ENCODE measurements at regions of chr10 and their contacts with region 1.

Region 1: DNA sequence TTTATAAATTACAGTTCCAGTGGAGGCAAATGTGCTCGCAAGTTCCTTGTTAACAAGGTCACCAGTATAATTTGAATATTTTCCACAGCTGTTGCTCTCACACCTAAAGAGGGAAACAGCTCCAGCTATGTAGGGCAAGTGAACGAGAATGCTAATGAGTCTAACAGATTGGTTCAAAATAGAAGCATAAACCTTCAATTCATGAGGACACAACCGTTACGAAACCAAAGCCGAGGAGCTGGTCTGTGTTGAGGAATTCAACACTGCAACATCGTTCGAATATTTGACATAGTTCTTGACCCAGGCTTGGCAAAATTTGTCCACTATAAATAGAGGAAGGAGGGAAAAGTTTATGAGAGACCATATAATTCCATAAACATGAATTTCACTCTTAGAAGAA is 161.3 kb downstream of the KLF6 start:
- DNase-seq: peak; percentile 87
- ATAC-seq: peak; percentile 78
- H3K4me3 ChIP-seq: no peak overlapping the region
- H3K27ac ChIP-seq: peak overlapping the region; percentile 15; the same call in 1 of the 2 replicates
- H3K4me1 ChIP-seq: peaks cover 11% of the 10 kb centered on the region
- H3K27me3 ChIP-seq: no peaks in the 10 kb centered on the region
- CTCF ChIP-seq: no peak
- POLR2A ChIP-seq: no peak
- RAD21 ChIP-seq: no peak

Region 2: DNA sequence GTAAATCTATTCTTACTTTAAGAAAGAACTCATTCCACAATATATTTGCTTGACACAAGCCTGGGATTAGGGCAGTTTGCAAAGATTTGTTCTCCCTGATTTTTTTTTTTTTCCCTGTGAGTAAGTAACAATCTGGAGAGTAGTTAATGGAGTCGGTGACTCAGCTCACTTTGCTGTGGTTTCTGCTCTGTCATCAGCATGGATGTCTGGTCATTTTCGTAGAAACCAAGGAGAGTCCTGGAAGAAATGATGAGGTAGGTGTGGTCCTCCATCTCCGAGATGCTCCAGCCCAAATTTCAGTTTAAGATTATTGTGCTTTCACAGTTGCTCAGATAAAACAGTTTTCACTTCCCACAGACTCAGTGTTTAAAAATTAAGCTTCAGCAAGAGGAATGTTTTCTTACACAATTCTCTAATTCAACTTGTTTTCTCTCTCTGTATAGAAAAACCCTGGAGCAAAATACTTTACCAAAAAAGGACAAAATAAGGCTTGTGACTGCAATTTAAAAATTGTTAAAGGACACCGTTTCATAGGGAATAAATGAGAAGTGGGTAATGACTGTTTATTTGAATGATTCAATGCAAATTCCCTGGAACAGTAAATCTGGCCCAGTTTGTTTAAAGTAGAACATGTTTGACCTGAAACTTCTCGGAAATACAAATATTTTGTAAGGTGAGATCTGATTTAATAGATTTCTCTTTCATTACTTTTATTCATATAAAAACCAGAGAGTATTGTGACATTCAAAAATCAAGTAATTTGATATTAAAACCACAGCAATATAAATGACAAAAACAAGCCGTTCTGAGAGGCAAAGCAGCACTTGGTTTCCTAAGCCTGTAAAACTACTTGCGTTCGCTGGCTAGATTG is 374.6 kb before region 1 on chr10:
- CTCF ChIA-PET with region 1: no interaction called
- POLR2A ChIA-PET with region 1: no interaction called
- dilution Hi-C with region 1: no loop called
- in situ Hi-C with region 1: no loop called
- intact Hi-C with region 1: loop called (anchors 2 kb)
- DNase-seq: peak; percentile 94
- ATAC-seq: peak; percentile 95
- H3K4me3 ChIP-seq: peak overlapping the region; percentile 11; the same call in 1 of the 2 replicates
- H3K27ac ChIP-seq: peak overlapping the region; percentile 89
- H3K4me1 ChIP-seq: peaks cover 4% of the 10 kb centered on the region
- H3K27me3 ChIP-seq: no peaks in the 10 kb centered on the region
- CTCF ChIP-seq: no peak
- POLR2A ChIP-seq: no peak
- RAD21 ChIP-seq: no peak; the same call in 1 of the 2 replicates

Region 3: DNA sequence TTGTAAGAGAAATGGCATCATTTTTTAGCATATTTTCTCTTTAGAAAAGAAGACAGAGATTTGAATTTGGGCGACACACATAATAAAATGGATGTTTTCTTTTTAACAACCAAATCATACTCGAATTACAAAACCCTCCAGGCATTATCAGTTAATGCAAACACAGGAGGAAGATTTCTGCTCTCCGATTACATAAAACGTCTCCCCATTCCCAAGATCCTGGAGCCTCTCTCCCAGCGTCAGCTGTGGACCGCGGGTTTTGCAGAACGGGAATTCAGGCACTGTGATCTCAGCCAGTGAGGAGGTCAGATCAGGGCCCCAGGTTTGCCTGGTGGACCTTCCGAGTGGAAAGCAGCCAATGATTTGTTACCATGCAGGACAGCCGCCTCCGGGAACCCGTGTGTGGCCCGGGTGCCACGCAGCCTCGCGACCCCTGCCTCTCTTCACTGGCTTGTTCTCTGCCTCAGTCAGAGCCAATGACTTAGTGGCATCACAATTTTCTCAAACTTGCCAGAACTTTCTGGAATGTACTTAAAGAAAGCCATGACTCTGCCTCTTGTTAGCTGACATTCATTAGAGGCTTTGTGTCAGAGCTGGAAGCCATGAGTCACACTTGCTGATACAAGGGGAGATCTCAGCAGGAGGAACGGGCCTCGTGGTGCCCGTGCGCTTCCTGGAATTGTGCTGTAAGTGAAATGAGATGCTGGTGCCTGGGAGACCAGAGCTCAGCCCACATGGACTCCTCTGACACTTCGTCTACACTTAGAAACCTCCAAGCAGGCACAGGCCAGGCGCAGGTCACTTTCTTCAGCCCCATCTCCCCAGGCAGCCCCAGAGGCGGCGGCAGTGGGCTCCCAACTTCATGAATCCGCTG is 84.9 kb before region 1 on chr10:
- CTCF ChIA-PET with region 1: no interaction called
- POLR2A ChIA-PET with region 1: no interaction called
- dilution Hi-C with region 1: no loop called
- in situ Hi-C with region 1: no loop called
- intact Hi-C with region 1: loop called (anchors 2 kb)
- DNase-seq: peak; percentile 97
- ATAC-seq: peak; percentile 86
- H3K4me3 ChIP-seq: peak overlapping the region; percentile 3; the same call in 1 of the 2 replicates
- H3K27ac ChIP-seq: peak overlapping the region; percentile 80
- H3K4me1 ChIP-seq: peaks cover 22% of the 10 kb centered on the region
- H3K27me3 ChIP-seq: no peaks in the 10 kb centered on the region
- CTCF ChIP-seq: no peak
- POLR2A ChIP-seq: no peak
- RAD21 ChIP-seq: no peak

Region 4: DNA sequence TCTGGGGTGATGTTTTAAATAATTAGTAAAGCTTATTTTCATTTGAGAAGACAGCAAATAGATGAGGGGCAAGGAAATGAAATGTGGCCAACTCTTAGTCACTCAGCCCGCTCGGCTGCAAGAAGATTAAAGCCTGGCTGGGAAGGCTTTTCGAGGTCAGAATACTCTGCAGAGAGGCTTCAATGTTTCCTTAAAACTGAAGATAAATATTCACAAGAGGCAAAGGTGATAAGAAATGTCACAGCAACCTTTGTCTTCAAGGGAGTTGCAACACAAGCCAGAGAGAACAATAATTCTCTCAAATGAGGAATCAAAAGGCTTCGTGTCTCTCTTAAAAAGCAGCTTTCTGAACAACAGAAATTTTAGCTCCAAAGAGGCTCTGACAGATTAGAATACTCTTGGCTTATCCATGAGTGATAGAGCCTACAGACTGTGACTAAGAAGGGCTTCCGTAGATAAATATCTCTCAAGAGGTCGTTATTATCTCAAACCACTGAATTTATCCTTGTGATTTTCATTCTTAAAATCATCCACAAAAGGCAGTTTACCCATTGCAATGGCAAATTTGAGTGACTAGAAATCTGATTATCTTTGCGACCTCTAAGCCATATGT is 68.7 kb after region 1 on chr10:
- CTCF ChIA-PET with region 1: no interaction called
- POLR2A ChIA-PET with region 1: no interaction called
- dilution Hi-C with region 1: no loop called
- in situ Hi-C with region 1: no loop called
- intact Hi-C with region 1: no loop called
- DNase-seq: no peak
- ATAC-seq: no peak
- H3K4me3 ChIP-seq: no peak overlapping the region
- H3K27ac ChIP-seq: no peak overlapping the region
- H3K4me1 ChIP-seq: 0 out of 2 replicates have a peak, but pooled peaks cover 1% of the 10 kb centered on the region
- H3K27me3 ChIP-seq: 0 out of 2 replicates have a peak, but pooled peaks cover 2% of the 10 kb centered on the region
- CTCF ChIP-seq: no peak
- POLR2A ChIP-seq: no peak
- RAD21 ChIP-seq: no peak

Region 5: GRCh38 chr10:3747984-3748383 is 124.2 kb after region 1 on chr10:
- CTCF ChIA-PET with region 1: no interaction called
- POLR2A ChIA-PET with region 1: no interaction called
- dilution Hi-C with region 1: no loop called
- in situ Hi-C with region 1: no loop called
- intact Hi-C with region 1: no loop called
- DNase-seq: no peak
- ATAC-seq: no peak
- H3K4me3 ChIP-seq: no peak overlapping the region
- H3K27ac ChIP-seq: no peak overlapping the region
- H3K4me1 ChIP-seq: peaks cover 11% of the 10 kb centered on the region
- H3K27me3 ChIP-seq: no peaks in the 10 kb centered on the region
- CTCF ChIP-seq: no peak
- POLR2A ChIP-seq: no peak
- RAD21 ChIP-seq: no peak

Measured in IMR-90 (cell line).